Activated B cell treated with CpG ODN at 0.5 μM for 24 hours (primary cell): ENCODE measurements at regions of chr1 and their contacts with region 1.

Region 1: GRCh38 chr1:32215629-32216480 is 6.3 kb downstream of the TMEM234 start:
- DNase-seq: no peak
- ATAC-seq: peak; percentile 93
- H3K4me3 Mint-ChIP-seq: no peak overlapping the region
- H3K27ac Mint-ChIP-seq: no peak overlapping the region
- H3K4me1 Mint-ChIP-seq: peaks cover 21% of the 10 kb centered on the region
- H3K27me3 Mint-ChIP-seq: no peaks in the 10 kb centered on the region
- CTCF ChIP-seq: peak; percentile 44

Region 2: DNA sequence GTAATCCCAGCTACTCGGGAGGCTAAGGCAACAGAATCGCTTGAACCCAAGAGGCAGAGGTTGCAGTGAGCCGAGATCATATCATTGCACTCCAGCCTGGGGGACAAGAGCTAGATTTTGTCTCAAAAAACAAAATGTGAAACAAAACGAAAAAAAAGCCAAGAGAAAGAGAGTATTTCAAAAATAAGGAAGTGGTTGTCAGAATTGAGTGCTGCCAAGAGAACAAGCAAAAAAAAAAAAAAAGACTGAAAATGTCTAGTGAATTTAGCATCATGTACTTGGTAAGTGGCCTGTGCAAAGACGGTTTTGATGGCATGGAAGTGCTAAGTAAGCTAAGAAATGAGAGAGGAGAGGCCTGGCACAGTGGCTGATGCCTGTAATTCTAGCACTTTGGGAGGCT is 93.7 kb before region 1 on chr1:
- CTCF ChIA-PET with region 1: no interaction called
- POLR2A ChIA-PET with region 1: no interaction called
- intact Hi-C with region 1: no loop called
- DNase-seq: no peak
- ATAC-seq: peak; percentile 25
- H3K4me3 Mint-ChIP-seq: peak overlapping the region; percentile 47
- H3K27ac Mint-ChIP-seq: peak overlapping the region; percentile 54
- H3K4me1 Mint-ChIP-seq: peaks cover 55% of the 10 kb centered on the region
- H3K27me3 Mint-ChIP-seq: no peaks in the 10 kb centered on the region
- CTCF ChIP-seq: no peak

Region 3: DNA sequence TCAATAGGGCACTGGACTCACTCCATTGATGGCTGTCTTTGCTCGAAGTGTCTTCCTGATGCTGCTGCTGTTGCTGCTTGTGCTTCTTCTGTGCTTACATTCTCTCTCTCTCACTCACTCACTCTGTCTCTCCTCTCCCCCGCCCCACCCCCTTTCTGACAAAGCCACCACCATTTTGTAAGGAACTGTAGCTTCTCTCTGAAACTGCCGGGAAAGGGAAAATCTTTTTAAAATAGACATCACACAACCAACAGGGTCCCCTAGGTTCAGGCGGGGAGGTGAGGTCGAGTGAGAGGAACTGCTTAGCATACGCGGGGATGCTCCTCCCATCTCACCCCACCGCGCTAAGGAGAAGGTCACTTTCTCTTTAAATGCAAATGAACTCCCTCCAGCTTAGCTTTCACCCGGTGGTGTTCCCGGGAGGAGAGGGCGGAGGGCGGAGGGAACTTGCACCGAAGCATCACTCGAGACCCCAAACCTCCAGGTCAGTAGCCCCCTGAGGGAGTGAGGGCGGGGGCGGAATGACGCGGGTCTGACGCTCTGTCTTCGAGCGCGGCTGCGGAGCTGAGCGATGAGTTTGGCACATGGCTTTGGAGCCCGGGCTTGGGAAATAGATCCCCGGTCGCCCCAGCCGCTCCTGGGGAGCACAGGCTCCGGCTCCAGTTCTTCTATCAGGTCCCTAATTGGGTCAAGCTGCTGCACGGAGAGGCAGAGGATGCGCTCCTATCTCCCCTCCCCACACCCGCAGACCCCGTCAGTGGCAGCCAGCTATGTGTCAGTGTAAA is 15.4 kb before region 1 on chr1 and contains the start of gene CCDC28B:
- CTCF ChIA-PET with region 1: interaction called, 23 read pairs
- POLR2A ChIA-PET with region 1: interaction called, 16 read pairs
- intact Hi-C with region 1: loop called (anchors 1 kb)
- DNase-seq: peak; percentile 62
- ATAC-seq: peak; percentile 51
- H3K4me3 Mint-ChIP-seq: peak within 1 kb of the TSS; percentile 87
- H3K27ac Mint-ChIP-seq: peak within 1 kb of the TSS; percentile 87
- H3K4me1 Mint-ChIP-seq: peaks cover 49% of the 10 kb centered on the region
- H3K27me3 Mint-ChIP-seq: no peaks in the 10 kb centered on the region
- CTCF ChIP-seq: no peak
- total RNA-seq, gene CCDC28B: 50.4 and 56.9 TPM in 2 replicates

Region 4: GRCh38 chr1:32240140-32240951 is 24.5 kb after region 1 on chr1:
- CTCF ChIA-PET with region 1: interaction called, 12 read pairs
- POLR2A ChIA-PET with region 1: interaction called, 33 read pairs
- intact Hi-C with region 1: no loop called
- DNase-seq: peak; percentile 68
- ATAC-seq: peak; percentile 77
- H3K4me3 Mint-ChIP-seq: peak overlapping the region; percentile 89
- H3K27ac Mint-ChIP-seq: peak overlapping the region; percentile 87
- H3K4me1 Mint-ChIP-seq: peaks cover 21% of the 10 kb centered on the region
- H3K27me3 Mint-ChIP-seq: no peaks in the 10 kb centered on the region
- CTCF ChIP-seq: no peak

Region 5: GRCh38 chr1:32321712-32322291 is 105.9 kb after region 1 on chr1:
- CTCF ChIA-PET with region 1: interaction called, 51 read pairs
- POLR2A ChIA-PET with region 1: interaction called, 5 read pairs
- intact Hi-C with region 1: no loop called
- DNase-seq: no peak
- ATAC-seq: peak; percentile 47
- H3K4me3 Mint-ChIP-seq: peak overlapping the region; percentile 68
- H3K27ac Mint-ChIP-seq: peak overlapping the region; percentile 89
- H3K4me1 Mint-ChIP-seq: peaks cover 71% of the 10 kb centered on the region
- H3K27me3 Mint-ChIP-seq: no peaks in the 10 kb centered on the region
- CTCF ChIP-seq: no peak

Region 6: DNA sequence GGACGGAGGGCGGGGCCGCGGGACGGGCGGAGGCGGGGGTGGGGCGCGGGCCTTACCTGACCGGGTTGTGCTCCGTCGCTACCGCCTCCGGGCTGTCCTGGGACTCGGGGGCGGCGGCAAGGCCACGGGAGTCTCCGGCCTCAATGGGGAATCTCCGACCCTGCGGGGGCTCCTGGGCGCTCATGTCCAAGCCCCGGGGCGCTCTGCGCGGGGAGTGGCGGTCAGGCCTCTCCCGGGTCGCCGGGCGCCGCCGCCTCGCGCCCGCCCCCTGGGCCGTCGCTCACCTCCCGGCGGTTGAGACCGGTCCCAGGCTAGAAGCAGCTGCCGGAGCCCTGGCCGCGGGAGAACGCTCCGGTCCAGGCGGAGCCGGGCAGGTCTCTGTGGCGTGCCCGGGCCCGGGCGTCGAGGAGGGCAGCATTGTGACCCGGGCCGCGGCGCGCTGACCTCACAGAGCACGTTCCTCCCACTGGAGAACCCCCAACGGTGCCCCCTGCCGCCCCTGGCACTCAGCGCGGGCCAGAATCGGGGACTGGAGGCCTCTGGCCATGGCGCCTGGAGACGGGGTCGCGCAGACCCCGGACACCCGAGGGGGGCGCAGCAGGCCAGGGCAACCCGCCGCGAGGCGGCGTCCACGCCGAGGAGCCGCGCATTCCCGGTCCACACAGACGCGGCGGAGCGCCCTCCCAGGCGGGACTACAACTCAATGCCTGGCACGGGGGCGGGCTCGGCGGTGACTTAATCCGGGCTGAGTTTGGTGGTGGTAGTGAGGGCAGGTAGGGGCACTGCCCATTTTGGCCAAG is 146.0 kb after region 1 on chr1:
- CTCF ChIA-PET with region 1: interaction called, 8 read pairs
- POLR2A ChIA-PET with region 1: interaction called, 4 read pairs
- intact Hi-C with region 1: loop called (anchors 5 kb)
- DNase-seq: peak; percentile 46
- ATAC-seq: peak; percentile 38
- H3K4me3 Mint-ChIP-seq: peak overlapping the region; percentile 58
- H3K27ac Mint-ChIP-seq: peak overlapping the region; percentile 65
- H3K4me1 Mint-ChIP-seq: peaks cover 31% of the 10 kb centered on the region
- H3K27me3 Mint-ChIP-seq: no peaks in the 10 kb centered on the region
- CTCF ChIP-seq: no peak

Region 7: GRCh38 chr1:32400876-32401631 is 185.2 kb after region 1 on chr1:
- CTCF ChIA-PET with region 1: interaction called, 11 read pairs
- POLR2A ChIA-PET with region 1: no interaction called
- intact Hi-C with region 1: no loop called
- DNase-seq: peak; percentile 51
- ATAC-seq: peak; percentile 83
- H3K4me3 Mint-ChIP-seq: no peak overlapping the region
- H3K27ac Mint-ChIP-seq: no peak overlapping the region
- H3K4me1 Mint-ChIP-seq: peaks cover 4% of the 10 kb centered on the region
- H3K27me3 Mint-ChIP-seq: no peaks in the 10 kb centered on the region
- CTCF ChIP-seq: peak; percentile 53